ENCODE measurements at regions of chr16 and their contacts with region 1.

Region 1: DNA sequence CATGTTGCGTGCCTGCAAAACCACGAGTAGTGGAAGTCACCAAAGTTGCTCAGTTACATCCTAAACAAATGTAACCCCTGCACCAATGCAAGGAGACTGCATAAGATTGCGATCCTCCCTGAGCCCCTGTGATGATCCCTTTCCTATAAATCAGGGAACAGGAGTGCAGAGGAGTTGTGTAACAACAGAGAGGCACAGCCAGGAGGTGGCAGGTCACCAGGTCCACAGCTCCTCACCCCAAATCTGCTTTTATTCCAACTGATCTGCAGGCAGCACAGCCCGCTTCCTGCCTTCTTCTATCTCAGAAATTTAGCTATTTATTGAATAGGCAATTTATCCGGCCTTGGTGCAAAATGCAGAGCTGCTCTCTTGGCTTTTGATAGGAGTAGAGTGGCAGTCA is 36.0 kb upstream of the MRTFB start:
- DNase-seq: no peak
- H3K4me3 ChIP-seq: no peak overlapping the region
- H3K27ac ChIP-seq: no peak overlapping the region
- H3K4me1 ChIP-seq: no peaks in the 10 kb centered on the region
- H3K27me3 ChIP-seq: no peaks in the 10 kb centered on the region
- CTCF ChIP-seq: no peak
- POLR2A ChIP-seq: no peak

Region 2: GRCh38 chr16:13816701-13817100 is 218.4 kb before region 1 on chr16:
- intact Hi-C with region 1: no loop called
- DNase-seq: no peak
- H3K4me3 ChIP-seq: no peak overlapping the region
- H3K27ac ChIP-seq: no peak overlapping the region
- H3K4me1 ChIP-seq: no peaks in the 10 kb centered on the region
- H3K27me3 ChIP-seq: no peaks in the 10 kb centered on the region
- CTCF ChIP-seq: no peak
- POLR2A ChIP-seq: no peak

Region 3: GRCh38 chr16:14013571-14014282 is 21.4 kb before region 1 on chr16:
- intact Hi-C with region 1: no loop called
- DNase-seq: peak; percentile 49 to 60
- H3K4me3 ChIP-seq: no peak overlapping the region
- H3K27ac ChIP-seq: peak overlapping the region; percentile 65 to 73
- H3K4me1 ChIP-seq: no peaks in the 10 kb centered on the region
- H3K27me3 ChIP-seq: no peaks in the 10 kb centered on the region
- CTCF ChIP-seq: no peak
- POLR2A ChIP-seq: no peak

Region 4: GRCh38 chr16:14105760-14106375 is 70.8 kb after region 1 on chr16:
- intact Hi-C with region 1: loop called (anchors 2 kb)
- DNase-seq: no peak
- H3K4me3 ChIP-seq: no peak overlapping the region
- H3K27ac ChIP-seq: no peak overlapping the region
- H3K4me1 ChIP-seq: peaks cover 0 to 8% of the 10 kb centered on the region in 2 donors
- H3K27me3 ChIP-seq: no peaks in the 10 kb centered on the region
- CTCF ChIP-seq: no peak
- POLR2A ChIP-seq: no peak

Measured in uterus (tissue), 4 donors.